Sciatic nerve (tissue), 2 donors: ENCODE measurements at regions of chr9 and their contacts with region 1.

Region 1: GRCh38 chr9:83538172-83538889 is at the start of gene FRMD3:
- DNase-seq: peak; percentile 90
- ATAC-seq: peak; percentile 91
- total RNA-seq, gene FRMD3: 38.1 TPM

Region 2: DNA sequence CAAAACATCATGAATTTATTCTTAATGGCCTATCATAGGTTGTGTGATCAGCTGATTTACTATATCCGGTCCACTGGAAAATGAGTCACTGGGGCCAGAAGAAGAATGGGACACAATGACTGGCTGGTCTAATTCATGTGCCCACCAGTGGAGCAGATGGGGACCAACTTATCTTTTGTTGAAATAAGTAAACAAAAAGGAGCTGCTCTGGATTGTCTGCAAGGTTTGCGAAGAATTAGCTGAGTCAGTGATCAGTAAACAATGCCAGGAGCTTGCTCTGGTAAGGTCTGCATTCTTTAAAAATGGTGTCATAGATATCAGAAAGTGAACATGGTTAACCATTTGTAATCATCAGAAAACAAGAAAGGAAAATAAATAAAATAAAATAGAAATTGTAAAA is 603.4 kb before region 1 on chr9:
- intact Hi-C with region 1: no loop called
- DNase-seq: no peak
- ATAC-seq: no peak

Region 3: GRCh38 chr9:82961504-82962125 is 576.7 kb before region 1 on chr9:
- intact Hi-C with region 1: no loop called
- DNase-seq: peak; percentile 80
- ATAC-seq: peak; percentile 86

Region 4: DNA sequence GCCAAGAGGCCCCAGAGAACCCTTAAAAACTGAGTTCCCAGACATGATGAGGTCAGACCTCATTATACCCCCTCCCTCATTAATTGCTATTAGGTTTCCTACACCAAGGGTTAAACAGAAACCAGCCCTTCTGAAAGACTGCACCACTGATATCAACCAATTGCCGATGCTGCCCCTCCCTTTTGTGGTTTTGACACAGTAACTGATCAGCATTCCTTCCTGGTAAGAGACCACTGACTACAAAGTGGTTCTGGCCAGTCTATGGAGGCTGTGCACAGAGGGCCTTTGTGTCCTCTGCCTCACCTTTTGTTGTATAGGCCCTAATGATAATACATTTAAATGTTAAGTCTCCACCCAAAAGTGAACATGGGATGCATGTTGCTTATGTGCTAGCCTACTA is 201.6 kb before region 1 on chr9:
- intact Hi-C with region 1: loop called (anchors 5 kb)
- DNase-seq: no peak
- ATAC-seq: no peak